WTC11 (cell line): ENCODE measurements at regions of chr11 and their contacts with region 1.

Region 1: GRCh38 chr11:61332797-61333549 is at the starts of genes DDB1 and TKFC:
- DNase-seq: peak; percentile 99
- ATAC-seq: peak; percentile 89
- H3K4me3 Mint-ChIP-seq: peak within 1 kb of the TSS; percentile 98
- H3K27ac Mint-ChIP-seq: peak within 1 kb of the TSS; percentile 98
- H3K4me1 Mint-ChIP-seq: peaks cover 48% of the 10 kb centered on the region
- H3K27me3 Mint-ChIP-seq: no peaks in the 10 kb centered on the region
- CTCF ChIP-seq: no peak
- total RNA-seq, gene DDB1: 270 to 316 TPM (median 295 TPM) in 3 replicates
- total RNA-seq, gene TKFC: 86.8 to 96.5 TPM (median 87.8 TPM) in 3 replicates

Region 2: GRCh38 chr11:61061081-61061826 is 271.7 kb before region 1 on chr11:
- CTCF ChIA-PET with region 1: no interaction called
- POLR2A ChIA-PET with region 1: no interaction called
- DNase-seq: no peak
- ATAC-seq: no peak
- H3K4me3 Mint-ChIP-seq: no peak overlapping the region
- H3K27ac Mint-ChIP-seq: no peak overlapping the region
- H3K4me1 Mint-ChIP-seq: 0 out of 2 replicates have a peak, but pooled peaks cover 3% of the 10 kb centered on the region
- H3K27me3 Mint-ChIP-seq: no peaks in the 10 kb centered on the region
- CTCF ChIP-seq: no peak

Region 3: DNA sequence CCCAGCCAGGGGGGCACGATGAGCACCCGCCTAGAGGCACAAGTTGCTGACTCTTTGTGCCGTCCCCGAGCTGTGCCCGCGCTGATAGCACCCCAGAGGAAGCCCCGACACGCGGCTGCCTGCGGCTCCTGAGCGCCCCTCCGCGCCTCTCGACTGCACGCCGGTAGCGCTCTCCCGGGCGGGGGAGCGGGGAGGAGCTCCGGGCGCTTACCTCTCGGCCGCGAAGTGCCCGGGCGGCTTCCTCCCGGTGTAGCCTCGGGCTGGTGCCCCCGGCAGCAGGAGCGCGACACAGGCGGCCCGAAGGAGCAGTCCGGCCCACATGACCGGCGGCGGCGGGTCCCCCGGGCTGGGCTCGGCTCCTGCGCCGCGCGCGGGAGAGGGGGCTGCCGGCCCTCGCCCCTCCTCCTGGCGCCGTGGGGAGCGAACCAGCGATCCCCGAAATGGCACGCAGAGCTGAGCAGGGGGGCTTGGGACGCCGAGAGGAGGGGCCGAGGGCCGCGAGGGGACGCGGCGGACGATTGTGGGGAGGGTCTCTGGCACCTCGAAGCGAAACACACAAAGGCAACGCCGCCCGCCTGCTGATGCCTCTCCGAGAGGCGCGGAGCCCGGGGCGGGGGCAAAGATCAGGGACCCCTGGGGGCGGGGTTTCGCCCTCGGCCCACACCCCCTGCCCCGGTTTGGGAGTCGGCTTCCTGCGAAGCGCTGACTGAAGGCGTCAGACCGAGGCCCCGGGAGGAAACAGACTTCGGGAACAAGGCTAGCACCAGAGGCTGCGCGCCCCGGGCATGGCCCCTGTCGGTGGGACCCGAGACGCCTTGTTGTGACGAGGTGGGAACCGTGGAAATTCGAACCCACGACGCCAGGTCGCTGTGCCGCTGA is 38.0 kb before region 1 on chr11 and contains the start of gene VWCE:
- CTCF ChIA-PET with region 1: interaction called, 12 read pairs
- POLR2A ChIA-PET with region 1: interaction called, 6 read pairs
- DNase-seq: peak; percentile 75
- ATAC-seq: peak; percentile 66
- H3K4me3 Mint-ChIP-seq: peak within 1 kb of the TSS; percentile 85
- H3K27ac Mint-ChIP-seq: no peak within 1 kb of the TSS
- H3K4me1 Mint-ChIP-seq: peaks cover 26% of the 10 kb centered on the region
- H3K27me3 Mint-ChIP-seq: peaks cover 17% of the 10 kb centered on the region
- CTCF ChIP-seq: no peak
- total RNA-seq, gene VWCE: 13.8 to 21.9 TPM (median 17.4 TPM) in 3 replicates

Region 4: GRCh38 chr11:61361686-61362541 is 28.9 kb after region 1 on chr11 and contains the starts of genes CYB561A3 and TMEM138:
- CTCF ChIA-PET with region 1: interaction called, 93 read pairs
- POLR2A ChIA-PET with region 1: interaction called, 29 read pairs
- DNase-seq: peak; percentile 92
- ATAC-seq: peak; percentile 93
- H3K4me3 Mint-ChIP-seq: peak within 1 kb of the TSS; percentile 96
- H3K27ac Mint-ChIP-seq: peak within 1 kb of the TSS; percentile 98
- H3K4me1 Mint-ChIP-seq: peaks cover 22% of the 10 kb centered on the region
- H3K27me3 Mint-ChIP-seq: no peaks in the 10 kb centered on the region
- CTCF ChIP-seq: no peak
- total RNA-seq, gene CYB561A3: 34.3 to 38.8 TPM (median 35.0 TPM) in 3 replicates
- total RNA-seq, gene TMEM138: 34.0 to 39.0 TPM (median 38.8 TPM) in 3 replicates

Region 5: GRCh38 chr11:61384271-61385242 is 51.6 kb after region 1 on chr11:
- CTCF ChIA-PET with region 1: interaction called, 346 read pairs
- POLR2A ChIA-PET with region 1: interaction called, 7 read pairs
- DNase-seq: peak; percentile 23
- ATAC-seq: peak; percentile 69
- H3K4me3 Mint-ChIP-seq: no peak overlapping the region
- H3K27ac Mint-ChIP-seq: no peak overlapping the region
- H3K4me1 Mint-ChIP-seq: peaks cover 5% of the 10 kb centered on the region; the same call in 1 of the 2 replicates
- H3K27me3 Mint-ChIP-seq: no peaks in the 10 kb centered on the region
- CTCF ChIP-seq: no peak

Region 6: DNA sequence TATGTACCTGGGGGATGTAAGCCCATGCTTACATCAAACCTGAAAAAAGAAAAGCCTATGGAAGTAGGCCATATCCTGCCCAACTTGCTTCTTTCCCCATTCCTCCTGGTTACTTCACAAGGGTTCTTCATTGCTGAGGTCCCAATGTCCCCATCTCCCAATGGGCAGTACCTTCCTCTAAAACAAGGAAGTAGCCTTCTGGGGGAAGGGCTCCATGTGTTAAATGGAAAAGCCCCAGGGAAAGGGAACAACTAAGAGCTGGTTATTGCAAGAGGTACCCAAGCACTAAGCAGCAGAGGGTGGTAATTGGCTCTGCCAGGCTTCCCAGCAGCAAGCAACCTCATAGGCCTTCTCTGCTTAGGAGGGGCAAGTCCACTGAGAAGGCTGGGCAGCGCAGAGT is 70.7 kb after region 1 on chr11:
- CTCF ChIA-PET with region 1: interaction called, 11 read pairs
- POLR2A ChIA-PET with region 1: no interaction called
- DNase-seq: no peak
- ATAC-seq: no peak
- H3K4me3 Mint-ChIP-seq: no peak overlapping the region
- H3K27ac Mint-ChIP-seq: no peak overlapping the region
- H3K4me1 Mint-ChIP-seq: no peaks in the 10 kb centered on the region
- H3K27me3 Mint-ChIP-seq: no peaks in the 10 kb centered on the region
- CTCF ChIP-seq: no peak

Region 7: DNA sequence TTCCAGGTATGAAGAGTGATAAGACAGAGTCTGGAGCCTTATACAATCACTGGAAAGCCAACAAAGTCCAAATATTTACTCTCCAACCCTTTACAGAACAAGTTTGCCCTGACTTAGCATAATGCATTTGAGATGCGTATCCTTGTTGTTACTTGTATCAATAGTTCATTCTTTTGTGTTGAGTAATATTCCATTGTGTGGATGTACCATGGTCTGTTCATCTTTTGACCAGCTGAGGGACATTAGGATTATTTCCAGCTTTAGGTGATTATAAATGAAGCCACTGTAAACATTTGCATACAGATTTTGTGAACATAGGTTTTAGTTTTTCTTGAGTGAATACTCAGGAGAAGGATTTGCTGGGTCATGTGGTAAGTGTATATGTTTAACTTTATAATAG is 106.6 kb after region 1 on chr11:
- CTCF ChIA-PET with region 1: interaction called, 20 read pairs
- POLR2A ChIA-PET with region 1: no interaction called
- DNase-seq: no peak
- ATAC-seq: no peak
- H3K4me3 Mint-ChIP-seq: no peak overlapping the region
- H3K27ac Mint-ChIP-seq: no peak overlapping the region
- H3K4me1 Mint-ChIP-seq: peaks cover 7% of the 10 kb centered on the region
- H3K27me3 Mint-ChIP-seq: no peaks in the 10 kb centered on the region
- CTCF ChIP-seq: no peak